ENCODE measurements at regions of chr10 and their contacts with region 1.

Region 1: GRCh38 chr10:65968866-65969265 is 957.0 kb upstream of the LRRTM3 start:
- DNase-seq: no peak
- H3K4me3 ChIP-seq: no peak overlapping the region
- H3K27ac ChIP-seq: no peak overlapping the region
- H3K4me1 ChIP-seq: no peaks in the 10 kb centered on the region
- H3K27me3 ChIP-seq: no peaks in the 10 kb centered on the region
- CTCF ChIP-seq: no peak

Region 2: DNA sequence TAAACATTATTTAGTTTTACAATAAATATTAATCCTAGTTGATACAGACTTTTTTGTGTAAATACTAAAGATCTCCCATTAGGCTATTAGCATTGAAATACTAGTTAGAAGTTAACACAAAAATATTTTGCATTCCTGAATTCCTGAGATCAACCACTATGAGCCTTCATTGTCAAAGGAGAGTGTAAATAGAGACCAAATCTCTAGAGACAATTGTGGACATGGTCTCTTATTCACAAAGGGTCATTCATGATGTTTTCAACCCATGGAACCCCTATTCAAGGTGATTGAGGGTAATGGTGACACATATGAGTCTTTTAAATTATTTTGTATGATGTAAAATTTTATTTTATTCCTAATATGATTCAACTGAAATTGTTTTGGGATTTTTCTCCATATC is 497.9 kb before region 1 on chr10:
- intact Hi-C with region 1: loop called (anchors 10 kb)
- DNase-seq: no peak
- H3K4me3 ChIP-seq: no peak overlapping the region
- H3K27ac ChIP-seq: no peak overlapping the region
- H3K4me1 ChIP-seq: no peaks in the 10 kb centered on the region
- H3K27me3 ChIP-seq: no peaks in the 10 kb centered on the region
- CTCF ChIP-seq: no peak

Region 3: DNA sequence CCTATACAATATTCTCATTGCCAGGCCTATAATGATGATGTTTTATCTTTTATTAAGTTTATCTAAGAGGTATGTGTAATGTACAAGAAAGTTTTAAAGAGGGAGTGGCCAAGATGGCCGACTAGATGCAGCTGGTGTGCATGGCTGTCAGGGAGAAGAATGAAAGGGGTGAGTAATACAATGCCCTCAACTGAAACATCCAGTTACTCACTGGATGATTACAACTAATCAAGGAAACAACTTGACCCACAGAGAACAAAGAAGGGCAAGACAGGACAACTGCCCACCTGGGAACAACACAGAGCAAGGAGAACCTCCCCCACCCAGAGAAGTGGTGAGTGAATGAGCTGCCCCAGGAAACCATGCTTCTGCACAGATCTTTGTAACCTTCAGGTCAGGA is 77.0 kb after region 1 on chr10:
- intact Hi-C with region 1: no loop called
- DNase-seq: no peak
- H3K4me3 ChIP-seq: no peak overlapping the region
- H3K27ac ChIP-seq: no peak overlapping the region
- H3K4me1 ChIP-seq: no peaks in the 10 kb centered on the region
- H3K27me3 ChIP-seq: no peaks in the 10 kb centered on the region
- CTCF ChIP-seq: no peak

Measured in left ventricle myocardium inferior (tissue), 1 donor.